Ovary (tissue), 10 donors: ENCODE measurements at regions of chr11 and their contacts with region 1.

Region 1: DNA sequence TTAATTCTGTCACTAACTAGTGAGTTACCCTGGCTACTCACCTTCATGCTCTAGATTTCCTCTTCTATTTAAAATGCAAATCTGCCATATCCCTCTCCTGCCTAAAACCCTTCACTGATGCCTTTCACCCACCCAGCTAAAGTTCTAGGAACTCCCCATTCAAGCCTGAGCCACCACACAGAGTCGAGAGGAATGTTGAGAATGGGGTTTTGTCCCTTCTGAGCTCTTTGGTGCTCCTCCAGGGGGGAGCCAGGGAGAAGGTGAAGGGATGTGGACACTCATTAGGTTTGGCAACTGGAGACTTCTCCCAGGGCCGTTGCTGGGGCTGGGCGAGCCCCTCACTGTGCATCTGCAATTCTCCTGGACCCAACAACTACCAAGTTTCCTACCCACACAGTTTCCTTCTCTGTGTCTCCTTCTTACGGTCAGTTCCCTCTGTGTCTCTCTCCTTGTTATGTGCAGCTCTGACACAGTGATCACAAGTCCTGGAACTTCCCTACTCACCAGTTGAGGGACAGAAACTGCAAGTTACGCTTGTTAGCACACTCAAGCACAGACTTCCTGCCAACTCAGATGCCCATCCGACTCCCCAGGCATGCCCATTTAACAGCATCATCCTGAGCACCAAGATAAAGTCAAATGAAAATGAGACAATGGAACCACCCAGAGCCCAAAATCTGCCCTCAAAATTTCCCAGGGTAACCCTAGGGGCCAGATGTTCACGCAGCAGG is 6.5 kb upstream of the IL10RA start:
- DNase-seq: no peak
- H3K4me3 ChIP-seq: no peak overlapping the region
- H3K27ac ChIP-seq: no peak overlapping the region
- H3K4me1 ChIP-seq: no peaks in the 10 kb centered on the region
- H3K27me3 ChIP-seq: no peaks in the 10 kb centered on the region
- CTCF ChIP-seq: no peak
- EP300 ChIP-seq: no peak
- POLR2A ChIP-seq: no peak

Region 2: GRCh38 chr11:117117681-117118080 is 862.0 kb before region 1 on chr11:
- intact Hi-C with region 1: loop called in 1 of 4 experiments (anchors 5 kb)
- DNase-seq: no peak
- H3K4me3 ChIP-seq: no peak overlapping the region
- H3K27ac ChIP-seq: no peak overlapping the region
- H3K4me1 ChIP-seq: no peaks in the 10 kb centered on the region
- H3K27me3 ChIP-seq: no peaks in the 10 kb centered on the region
- CTCF ChIP-seq: no peak
- EP300 ChIP-seq: no peak
- POLR2A ChIP-seq: no peak

Region 3: DNA sequence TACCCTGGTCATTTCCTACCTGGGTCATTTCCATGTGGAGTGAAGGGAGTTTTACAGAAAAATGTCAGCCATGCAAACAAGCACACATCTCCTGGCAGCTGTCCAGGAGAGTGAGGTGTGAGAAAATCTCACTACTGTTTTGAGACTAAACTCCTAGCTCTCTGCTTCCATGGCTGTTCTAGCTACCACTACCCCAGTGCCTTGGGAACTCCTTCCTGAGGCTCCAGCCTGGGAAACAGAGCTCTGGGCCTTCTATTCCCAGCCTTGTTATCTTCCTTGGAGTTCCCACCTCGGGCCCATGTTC is 47.6 kb before region 1 on chr11:
- intact Hi-C with region 1: no loop called
- DNase-seq: peak in 4 of 5 donors; percentile 30 to 56 (median 42)
- H3K4me3 ChIP-seq: no peak overlapping the region
- H3K27ac ChIP-seq: no peak overlapping the region
- H3K4me1 ChIP-seq: peaks cover 1% of the 10 kb centered on the region
- H3K27me3 ChIP-seq: no peaks in the 10 kb centered on the region
- CTCF ChIP-seq: no peak
- EP300 ChIP-seq: no peak
- POLR2A ChIP-seq: no peak

Region 4: GRCh38 chr11:118015385-118015841 is 35.8 kb after region 1 on chr11:
- intact Hi-C with region 1: no loop called
- DNase-seq: no peak
- H3K4me3 ChIP-seq: no peak overlapping the region
- H3K27ac ChIP-seq: no peak overlapping the region
- H3K4me1 ChIP-seq: no peaks in the 10 kb centered on the region
- H3K27me3 ChIP-seq: no peaks in the 10 kb centered on the region
- CTCF ChIP-seq: no peak
- EP300 ChIP-seq: no peak
- POLR2A ChIP-seq: no peak

Region 5: GRCh38 chr11:118198370-118198769 is 218.7 kb after region 1 on chr11:
- intact Hi-C with region 1: no loop called
- DNase-seq: peak; percentile 66 to 81 (median 73)
- H3K4me3 ChIP-seq: no peak overlapping the region
- H3K27ac ChIP-seq: no peak overlapping the region
- H3K4me1 ChIP-seq: no peaks in the 10 kb centered on the region
- H3K27me3 ChIP-seq: no peaks in the 10 kb centered on the region
- CTCF ChIP-seq: peak; percentile 23 to 39 (median 28)
- EP300 ChIP-seq: no peak
- POLR2A ChIP-seq: no peak